CD4-positive, alpha-beta memory T cell (primary cell): ENCODE measurements at regions of chr7 and their contacts with region 1.

Region 1: GRCh38 chr7:130896898-130897514 is 163.0 kb upstream of the KLF14 start:
- DNase-seq: peak; percentile 71 to 80 (median 75)
- H3K4me3 ChIP-seq: no peak overlapping the region
- H3K4me3 Mint-ChIP-seq: peak overlapping the region in 7 of 8 donors; percentile 2 to 72 (median 35)
- H3K27ac ChIP-seq: peak overlapping the region; percentile 18
- H3K27ac Mint-ChIP-seq: peak overlapping the region; percentile 88 to 95 (median 94)
- H3K4me1 ChIP-seq: peaks cover 87% of the 10 kb centered on the region
- H3K4me1 Mint-ChIP-seq: peaks cover 64 to 97% (median 82%) of the 10 kb centered on the region in 4 donors
- H3K27me3 ChIP-seq: no peaks in the 10 kb centered on the region
- H3K27me3 Mint-ChIP-seq: no peaks in the 10 kb centered on the region

Region 2: GRCh38 chr7:130912862-130913631 is 16.0 kb after region 1 on chr7:
- CTCF ChIA-PET with region 1: interaction called, 42 read pairs
- POLR2A ChIA-PET with region 1: interaction called, 23 read pairs
- intact Hi-C with region 1: loop called (anchors 2 kb)
- DNase-seq: peak; percentile 80 to 98 (median 85)
- H3K4me3 ChIP-seq: peak overlapping the region; percentile 77 to 86
- H3K4me3 Mint-ChIP-seq: peak overlapping the region; percentile 82 to 98 (median 92)
- H3K27ac ChIP-seq: peak overlapping the region; percentile 96
- H3K27ac Mint-ChIP-seq: peak overlapping the region in 6 of 7 donors; percentile 93 to 99 (median 98)
- H3K4me1 ChIP-seq: peaks cover 86% of the 10 kb centered on the region
- H3K4me1 Mint-ChIP-seq: peaks cover 78 to 97% (median 89%) of the 10 kb centered on the region in 4 donors
- H3K27me3 ChIP-seq: no peaks in the 10 kb centered on the region
- H3K27me3 Mint-ChIP-seq: no peaks in the 10 kb centered on the region

Region 3: GRCh38 chr7:130961128-130961601 is 64.2 kb after region 1 on chr7:
- CTCF ChIA-PET with region 1: interaction called, 50 read pairs
- POLR2A ChIA-PET with region 1: interaction called, 6 read pairs
- intact Hi-C with region 1: loop called (anchors 2 kb)
- DNase-seq: peak; percentile 83 to 94 (median 90)
- H3K4me3 ChIP-seq: peak overlapping the region; percentile 27 to 60
- H3K4me3 Mint-ChIP-seq: peak overlapping the region; percentile 88 to 97 (median 94)
- H3K27ac ChIP-seq: peak overlapping the region; percentile 93
- H3K27ac Mint-ChIP-seq: peak overlapping the region in 6 of 7 donors; percentile 96 to 100 (median 99)
- H3K4me1 ChIP-seq: peaks cover 71% of the 10 kb centered on the region
- H3K4me1 Mint-ChIP-seq: peaks cover 26 to 75% (median 47%) of the 10 kb centered on the region in 4 donors
- H3K27me3 ChIP-seq: no peaks in the 10 kb centered on the region
- H3K27me3 Mint-ChIP-seq: no peaks in the 10 kb centered on the region

Region 4: GRCh38 chr7:130988443-130988842 is 91.4 kb after region 1 on chr7:
- CTCF ChIA-PET with region 1: interaction called, 69 read pairs
- POLR2A ChIA-PET with region 1: no interaction called
- intact Hi-C with region 1: no loop called
- DNase-seq: peak; percentile 54 to 80 (median 77)
- H3K4me3 ChIP-seq: no peak overlapping the region
- H3K4me3 Mint-ChIP-seq: peak overlapping the region; percentile 6 to 74 (median 68)
- H3K27ac ChIP-seq: peak overlapping the region; percentile 73
- H3K27ac Mint-ChIP-seq: peak overlapping the region in 6 of 7 donors; percentile 95 to 99 (median 96)
- H3K4me1 ChIP-seq: peaks cover 97% of the 10 kb centered on the region
- H3K4me1 Mint-ChIP-seq: peaks cover 32 to 87% (median 71%) of the 10 kb centered on the region in 4 donors
- H3K27me3 ChIP-seq: no peaks in the 10 kb centered on the region
- H3K27me3 Mint-ChIP-seq: no peaks in the 10 kb centered on the region

Region 5: GRCh38 chr7:131021460-131021859 is 124.5 kb after region 1 on chr7:
- CTCF ChIA-PET with region 1: interaction called, 26 read pairs
- POLR2A ChIA-PET with region 1: no interaction called
- intact Hi-C with region 1: no loop called
- DNase-seq: no peak
- H3K4me3 ChIP-seq: peak overlapping the region in 1 of 2 donors; percentile 12
- H3K4me3 Mint-ChIP-seq: peak overlapping the region; percentile 53 to 78 (median 74)
- H3K27ac ChIP-seq: peak overlapping the region; percentile 27
- H3K27ac Mint-ChIP-seq: peak overlapping the region; percentile 62 to 95 (median 89)
- H3K4me1 ChIP-seq: peaks cover 95% of the 10 kb centered on the region
- H3K4me1 Mint-ChIP-seq: peaks cover 64 to 92% (median 79%) of the 10 kb centered on the region in 4 donors
- H3K27me3 ChIP-seq: no peaks in the 10 kb centered on the region
- H3K27me3 Mint-ChIP-seq: no peaks in the 10 kb centered on the region

Region 6: DNA sequence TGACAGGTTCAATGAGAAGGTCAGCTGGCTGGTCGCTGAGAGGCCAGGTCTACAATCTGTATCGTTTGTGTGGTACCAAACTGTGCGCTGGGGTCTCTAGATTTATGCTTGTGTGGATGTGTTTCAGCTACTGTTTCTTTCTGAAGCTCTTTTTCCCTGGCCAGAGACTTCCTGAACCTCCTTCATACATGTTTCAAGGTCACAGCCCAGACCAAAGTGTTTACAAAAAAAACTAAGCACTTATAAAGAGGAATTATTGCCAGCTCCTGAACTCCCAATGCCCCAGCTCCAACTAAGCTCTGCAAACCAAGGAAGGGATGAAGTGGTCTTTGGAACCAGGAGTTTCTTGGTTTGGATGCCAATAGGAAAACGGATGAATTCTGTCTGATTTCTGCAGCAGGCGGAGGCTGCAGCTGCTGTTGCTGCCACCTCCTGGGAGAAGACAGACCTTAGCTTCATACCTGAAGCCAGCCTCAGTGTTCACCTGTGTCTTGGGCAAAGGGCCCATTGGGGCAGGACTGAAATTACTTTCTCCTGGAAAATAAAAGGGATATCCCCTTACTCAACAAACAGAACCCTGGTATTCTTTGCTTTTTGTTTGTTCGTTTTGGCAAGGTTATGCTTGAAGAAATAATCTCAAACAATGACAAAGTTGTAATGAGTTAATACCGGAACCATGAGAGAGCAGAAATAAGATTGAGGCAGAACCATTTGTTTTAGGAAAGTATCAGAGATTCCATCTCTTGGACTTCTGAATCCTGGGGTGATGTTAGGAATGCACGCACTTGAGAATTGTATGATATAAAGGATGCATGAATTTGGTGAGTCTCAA is 406.1 kb after region 1 on chr7:
- CTCF ChIA-PET with region 1: interaction called, 9 read pairs
- POLR2A ChIA-PET with region 1: no interaction called
- intact Hi-C with region 1: loop called (anchors 2 kb)
- DNase-seq: peak in 4 of 5 donors; percentile 24 to 28 (median 25)
- H3K4me3 ChIP-seq: no peak overlapping the region
- H3K4me3 Mint-ChIP-seq: no peak overlapping the region
- H3K27ac ChIP-seq: no peak overlapping the region
- H3K27ac Mint-ChIP-seq: peak overlapping the region in 1 of 7 donors; percentile 25
- H3K4me1 ChIP-seq: no peaks in the 10 kb centered on the region
- H3K4me1 Mint-ChIP-seq: peaks cover 0 to 2% (median 0%) of the 10 kb centered on the region in 4 donors
- H3K27me3 ChIP-seq: no peaks in the 10 kb centered on the region
- H3K27me3 Mint-ChIP-seq: no peaks in the 10 kb centered on the region

Region 7: GRCh38 chr7:131544449-131545301 is 647.7 kb after region 1 on chr7:
- CTCF ChIA-PET with region 1: no interaction called
- POLR2A ChIA-PET with region 1: no interaction called
- intact Hi-C with region 1: no loop called
- DNase-seq: no peak
- H3K4me3 ChIP-seq: no peak overlapping the region
- H3K4me3 Mint-ChIP-seq: no peak overlapping the region
- H3K27ac ChIP-seq: no peak overlapping the region
- H3K27ac Mint-ChIP-seq: no peak overlapping the region
- H3K4me1 ChIP-seq: no peaks in the 10 kb centered on the region
- H3K4me1 Mint-ChIP-seq: peaks cover 0 to 8% (median 5%) of the 10 kb centered on the region in 4 donors
- H3K27me3 ChIP-seq: no peaks in the 10 kb centered on the region
- H3K27me3 Mint-ChIP-seq: no peaks in the 10 kb centered on the region

Region 8: GRCh38 chr7:131859147-131859821 is 962.3 kb after region 1 on chr7:
- CTCF ChIA-PET with region 1: no interaction called
- POLR2A ChIA-PET with region 1: no interaction called
- intact Hi-C with region 1: no loop called
- DNase-seq: peak in 4 of 5 donors; percentile 4 to 13 (median 8)
- H3K4me3 ChIP-seq: no peak overlapping the region
- H3K4me3 Mint-ChIP-seq: no peak overlapping the region
- H3K27ac ChIP-seq: no peak overlapping the region
- H3K27ac Mint-ChIP-seq: no peak overlapping the region
- H3K4me1 ChIP-seq: no peaks in the 10 kb centered on the region
- H3K4me1 Mint-ChIP-seq: no peaks in the 10 kb centered on the region
- H3K27me3 ChIP-seq: no peaks in the 10 kb centered on the region
- H3K27me3 Mint-ChIP-seq: peaks cover 0 to 2% of the 10 kb centered on the region in 2 donors